ENCODE measurements at regions of chr4 and their contacts with region 1.

Region 1: DNA sequence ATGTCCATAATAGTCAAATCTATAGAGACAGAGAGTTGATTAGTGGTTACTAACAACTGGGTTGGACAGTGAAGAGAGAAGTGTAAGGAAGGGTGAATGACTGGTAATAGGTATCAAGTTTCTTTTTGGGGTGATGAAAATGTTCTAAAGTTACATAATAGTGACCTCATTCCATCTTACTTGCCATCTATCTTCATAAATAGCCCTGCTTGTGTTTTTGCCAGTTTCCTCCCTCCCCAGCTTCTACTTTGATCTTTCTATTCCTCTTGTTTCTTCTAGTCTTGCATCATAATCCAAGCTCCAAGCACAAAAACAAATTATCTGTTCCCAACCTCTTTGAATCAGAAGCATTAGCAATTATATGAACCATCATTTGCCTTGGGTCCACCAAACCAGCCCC is 40.2 kb upstream of the TET2 start:
- DNase-seq: peak; percentile 17
- H3K4me3 Mint-ChIP-seq: no peak overlapping the region
- H3K27ac Mint-ChIP-seq: no peak overlapping the region
- H3K4me1 Mint-ChIP-seq: no peaks in the 10 kb centered on the region
- H3K27me3 Mint-ChIP-seq: no peaks in the 10 kb centered on the region
- CTCF ChIP-seq: no peak

Region 2: DNA sequence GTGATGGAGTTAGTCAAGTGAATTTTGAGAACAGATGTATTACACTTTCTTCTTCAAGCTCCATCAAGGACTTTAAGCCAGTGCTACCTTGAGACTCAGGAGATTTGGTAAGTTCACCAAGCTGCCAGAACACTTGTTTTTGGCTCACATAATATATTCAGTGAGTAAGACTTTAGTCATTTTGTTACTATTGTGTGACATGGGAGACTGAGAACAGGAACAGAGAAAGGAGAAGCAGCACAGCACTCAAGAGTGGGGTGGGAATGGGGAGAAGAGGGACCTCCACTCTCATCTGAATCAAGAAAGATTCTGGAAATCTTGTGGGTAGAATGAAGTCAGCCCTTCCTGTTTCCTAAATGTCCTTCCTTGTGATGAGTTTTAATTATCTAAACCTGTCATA is 47.1 kb before region 1 on chr4:
- CTCF ChIA-PET with region 1: no interaction called
- POLR2A ChIA-PET with region 1: no interaction called
- intact Hi-C with region 1: loop called (anchors 5 kb)
- DNase-seq: peak; percentile 45
- H3K4me3 Mint-ChIP-seq: no peak overlapping the region
- H3K27ac Mint-ChIP-seq: no peak overlapping the region
- H3K4me1 Mint-ChIP-seq: peaks cover 35% of the 10 kb centered on the region
- H3K27me3 Mint-ChIP-seq: no peaks in the 10 kb centered on the region
- CTCF ChIP-seq: no peak

Region 3: DNA sequence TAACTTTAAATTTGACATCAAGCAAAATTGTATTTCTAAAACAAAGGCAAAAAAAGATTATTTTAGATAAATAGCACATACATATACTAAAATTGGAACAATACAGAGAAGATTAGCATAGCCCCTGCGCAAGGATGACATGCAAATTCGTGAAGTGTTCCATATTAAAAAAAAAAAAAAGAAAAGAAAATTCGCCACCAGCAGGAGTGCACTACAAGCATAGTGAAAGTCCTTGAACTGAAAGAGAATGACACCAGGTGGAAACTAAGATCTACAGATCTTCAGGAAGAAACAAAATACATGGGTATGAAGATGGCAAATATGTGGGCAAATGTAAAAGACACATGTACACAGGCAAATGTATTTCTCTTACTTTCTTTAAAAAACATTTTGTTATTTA is 300.5 kb after region 1 on chr4:
- CTCF ChIA-PET with region 1: no interaction called
- POLR2A ChIA-PET with region 1: no interaction called
- intact Hi-C with region 1: no loop called
- DNase-seq: no peak
- H3K4me3 Mint-ChIP-seq: no peak overlapping the region
- H3K27ac Mint-ChIP-seq: no peak overlapping the region
- H3K4me1 Mint-ChIP-seq: no peaks in the 10 kb centered on the region
- H3K27me3 Mint-ChIP-seq: no peaks in the 10 kb centered on the region
- CTCF ChIP-seq: no peak